Activated CD4-positive, alpha-beta T cell treated with anti-CD3 and anti-CD28 coated beads, Interleukin-2, amount 10 ng/mL, durations not matched to agents 7 days and 5 days (primary cell): ENCODE measurements at regions of chr15 and their contacts with region 1.

Region 1: GRCh38 chr15:90931737-90932659 is at the start of gene HDDC3:
- DNase-seq: peak; percentile 93
- H3K4me3 Mint-ChIP-seq: peak within 1 kb of the TSS; percentile 98
- H3K27ac Mint-ChIP-seq: peak within 1 kb of the TSS; percentile 100
- H3K4me1 Mint-ChIP-seq: peaks cover 64% of the 10 kb centered on the region
- H3K27me3 Mint-ChIP-seq: no peaks in the 10 kb centered on the region
- total RNA-seq, gene HDDC3: 22.9 to 26.2 TPM

Region 2: DNA sequence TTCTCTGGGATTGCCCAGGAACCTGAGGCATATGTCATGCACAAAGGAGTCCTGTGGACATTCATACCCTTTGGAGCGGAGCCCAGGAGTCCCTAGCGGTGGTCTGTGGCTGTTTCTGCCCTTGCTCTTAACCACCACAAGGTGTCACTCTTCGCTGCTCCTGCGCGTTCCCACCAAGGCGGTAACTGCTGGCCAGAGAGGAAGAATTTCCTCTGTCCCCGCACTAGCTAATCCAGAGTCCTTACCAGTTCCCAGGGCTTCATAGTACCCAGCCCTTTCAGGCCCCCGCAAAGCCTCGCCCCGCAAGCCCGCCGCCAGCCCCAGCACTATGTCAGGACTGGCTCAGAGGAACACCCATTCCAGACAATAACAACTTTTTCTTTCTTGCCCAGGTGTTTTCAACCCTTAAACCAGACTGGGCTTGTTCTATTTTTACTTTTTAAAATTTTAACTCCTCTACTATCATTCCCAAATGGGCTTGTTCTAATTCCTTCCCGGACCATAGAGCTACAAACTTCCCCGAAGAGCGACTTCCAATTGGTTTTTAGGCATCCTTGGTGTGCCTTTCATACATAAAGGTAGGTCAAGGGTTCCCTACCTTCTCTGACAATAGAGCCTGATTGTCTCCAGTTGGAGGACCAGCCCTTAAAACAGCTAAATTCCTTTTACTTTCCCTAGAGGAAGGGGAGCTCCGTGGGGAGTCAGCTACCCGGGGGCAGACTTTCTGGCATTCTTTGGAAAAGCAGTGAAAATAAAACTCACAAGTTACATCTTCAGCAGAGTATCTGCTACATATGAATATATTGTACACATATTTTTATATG is 611.7 kb before region 1 on chr15:
- CTCF ChIA-PET with region 1: interaction called, 15 read pairs
- POLR2A ChIA-PET with region 1: no interaction called
- DNase-seq: peak; percentile 73
- H3K4me3 Mint-ChIP-seq: no peak overlapping the region
- H3K27ac Mint-ChIP-seq: no peak overlapping the region
- H3K4me1 Mint-ChIP-seq: peaks cover 8% of the 10 kb centered on the region
- H3K27me3 Mint-ChIP-seq: no peaks in the 10 kb centered on the region

Region 3: GRCh38 chr15:90603893-90604292 is 328.1 kb before region 1 on chr15:
- CTCF ChIA-PET with region 1: no interaction called
- POLR2A ChIA-PET with region 1: no interaction called
- DNase-seq: peak; percentile 58
- H3K4me3 Mint-ChIP-seq: no peak overlapping the region
- H3K27ac Mint-ChIP-seq: peak overlapping the region; percentile 22
- H3K4me1 Mint-ChIP-seq: peaks cover 44% of the 10 kb centered on the region
- H3K27me3 Mint-ChIP-seq: no peaks in the 10 kb centered on the region

Region 4: GRCh38 chr15:90684281-90684680 is 247.7 kb before region 1 on chr15:
- CTCF ChIA-PET with region 1: no interaction called
- POLR2A ChIA-PET with region 1: no interaction called
- DNase-seq: no peak
- H3K4me3 Mint-ChIP-seq: no peak overlapping the region
- H3K27ac Mint-ChIP-seq: peak overlapping the region; percentile 50
- H3K4me1 Mint-ChIP-seq: peaks cover 69% of the 10 kb centered on the region
- H3K27me3 Mint-ChIP-seq: no peaks in the 10 kb centered on the region

Region 5: DNA sequence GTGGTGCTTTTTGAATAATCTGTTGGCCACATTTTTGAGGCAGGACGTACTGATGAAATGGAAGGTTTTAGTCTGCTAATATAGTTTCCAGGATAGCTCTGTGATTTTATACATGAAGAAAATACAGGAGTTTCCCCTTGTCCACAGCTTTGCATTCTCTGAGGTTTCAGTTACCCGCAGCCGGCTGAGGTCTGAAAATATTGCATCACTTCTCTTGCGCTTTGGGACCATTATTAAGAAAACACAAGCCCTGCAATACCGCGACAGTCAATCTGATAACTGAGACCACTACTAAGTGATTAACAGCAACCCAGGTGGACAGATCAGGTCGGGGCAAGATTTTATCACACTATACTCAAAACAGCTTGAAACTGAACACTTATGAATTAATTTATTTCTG is 181.8 kb before region 1 on chr15:
- CTCF ChIA-PET with region 1: interaction called, 10 read pairs
- POLR2A ChIA-PET with region 1: no interaction called
- DNase-seq: peak; percentile 10
- H3K4me3 Mint-ChIP-seq: no peak overlapping the region
- H3K27ac Mint-ChIP-seq: peak overlapping the region; percentile 17
- H3K4me1 Mint-ChIP-seq: peaks cover 30% of the 10 kb centered on the region
- H3K27me3 Mint-ChIP-seq: no peaks in the 10 kb centered on the region

Region 6: GRCh38 chr15:90886041-90886614 is 45.9 kb before region 1 on chr15:
- CTCF ChIA-PET with region 1: interaction called, 25 read pairs
- POLR2A ChIA-PET with region 1: interaction called, 3 read pairs
- DNase-seq: peak; percentile 80
- H3K4me3 Mint-ChIP-seq: no peak overlapping the region
- H3K27ac Mint-ChIP-seq: peak overlapping the region; percentile 78
- H3K4me1 Mint-ChIP-seq: peaks cover 35% of the 10 kb centered on the region
- H3K27me3 Mint-ChIP-seq: no peaks in the 10 kb centered on the region

Region 7: GRCh38 chr15:90902040-90902839 is 29.8 kb before region 1 on chr15:
- CTCF ChIA-PET with region 1: interaction called, 63 read pairs
- POLR2A ChIA-PET with region 1: interaction called, 4 read pairs
- DNase-seq: peak; percentile 77
- H3K4me3 Mint-ChIP-seq: peak overlapping the region; percentile 85
- H3K27ac Mint-ChIP-seq: peak overlapping the region; percentile 94
- H3K4me1 Mint-ChIP-seq: peaks cover 24% of the 10 kb centered on the region
- H3K27me3 Mint-ChIP-seq: no peaks in the 10 kb centered on the region

Region 8: DNA sequence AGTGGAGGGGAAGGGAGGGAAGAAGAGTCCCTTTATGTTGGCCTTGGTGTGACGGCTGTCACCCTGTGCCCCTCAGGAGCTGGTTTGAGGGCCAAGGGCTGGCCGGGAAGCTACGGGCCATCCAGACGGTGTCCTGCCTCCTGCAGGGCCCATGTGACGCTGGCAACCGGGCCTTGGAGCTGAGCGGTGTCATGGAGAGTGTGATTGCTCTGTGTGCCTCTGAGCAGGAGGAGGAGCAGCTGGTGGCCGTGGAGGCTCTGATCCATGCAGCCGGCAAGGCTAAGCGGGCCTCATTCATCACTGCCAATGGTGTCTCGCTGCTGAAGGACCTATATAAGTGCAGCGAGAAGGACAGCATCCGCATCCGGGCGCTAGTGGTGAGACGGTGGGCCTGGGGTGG is 14.5 kb after region 1 on chr15:
- CTCF ChIA-PET with region 1: interaction called, 140 read pairs
- POLR2A ChIA-PET with region 1: no interaction called
- DNase-seq: no peak
- H3K4me3 Mint-ChIP-seq: no peak overlapping the region
- H3K27ac Mint-ChIP-seq: no peak overlapping the region
- H3K4me1 Mint-ChIP-seq: no peaks in the 10 kb centered on the region
- H3K27me3 Mint-ChIP-seq: no peaks in the 10 kb centered on the region

Region 9: GRCh38 chr15:91068966-91069365 is 137.0 kb after region 1 on chr15:
- CTCF ChIA-PET with region 1: no interaction called
- POLR2A ChIA-PET with region 1: no interaction called
- DNase-seq: no peak
- H3K4me3 Mint-ChIP-seq: no peak overlapping the region
- H3K27ac Mint-ChIP-seq: no peak overlapping the region
- H3K4me1 Mint-ChIP-seq: no peaks in the 10 kb centered on the region
- H3K27me3 Mint-ChIP-seq: peaks cover 28% of the 10 kb centered on the region